ENCODE measurements at regions of chr1 and their contacts with region 1.

Region 1: DNA sequence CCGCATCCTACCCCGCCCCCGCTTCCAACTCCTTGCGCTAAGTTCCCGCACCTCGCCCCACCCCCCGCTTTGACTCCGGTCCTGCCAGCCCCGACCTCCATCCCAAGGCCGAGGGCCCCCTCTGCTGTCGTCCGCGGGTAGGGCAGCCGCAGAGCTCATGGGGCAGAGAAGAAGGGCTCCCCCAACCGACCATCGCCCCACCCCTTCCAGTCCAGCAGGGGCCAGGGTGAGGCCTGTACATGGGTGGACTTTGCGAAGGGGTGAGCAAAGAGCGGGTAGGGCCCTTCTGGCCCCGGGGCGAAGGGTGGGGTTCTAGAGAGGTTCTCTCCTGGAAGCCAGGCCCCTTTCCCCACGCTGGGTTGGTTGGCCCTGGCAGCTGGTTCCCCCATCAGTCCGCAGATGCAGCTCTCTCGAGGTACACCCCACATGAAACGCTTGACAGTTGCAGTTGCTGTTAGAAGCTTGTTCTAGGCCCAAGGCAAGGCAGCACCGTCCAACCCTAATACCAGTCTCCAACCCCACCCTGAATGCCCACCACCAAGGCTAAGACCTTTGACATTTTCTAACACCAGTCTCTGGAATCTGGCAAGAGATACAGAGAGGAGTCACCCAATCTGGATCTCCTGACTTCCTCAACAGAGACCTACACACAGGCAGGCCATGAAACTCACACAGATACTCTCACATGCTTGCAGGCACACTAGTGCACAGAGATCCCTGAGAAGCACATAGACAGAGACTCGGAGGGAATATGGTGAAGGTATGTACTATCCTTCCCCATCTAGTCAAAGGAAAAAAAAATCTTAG is 25.3 kb upstream of the ADGRB2 start:
- DNase-seq: peak; percentile 98
- ATAC-seq: peak; percentile 82
- H3K4me3 Mint-ChIP-seq: peak overlapping the region; percentile 76
- H3K27ac Mint-ChIP-seq: peak overlapping the region; percentile 35
- H3K4me1 Mint-ChIP-seq: peaks cover 11% of the 10 kb centered on the region
- H3K27me3 Mint-ChIP-seq: no peaks in the 10 kb centered on the region

Region 2: GRCh38 chr1:31644560-31645273 is 144.7 kb before region 1 on chr1 and contains the start of gene PEF1:
- CTCF ChIA-PET with region 1: interaction called, 31 read pairs
- DNase-seq: peak; percentile 99
- ATAC-seq: peak; percentile 85
- H3K4me3 Mint-ChIP-seq: peak within 1 kb of the TSS; percentile 96
- H3K27ac Mint-ChIP-seq: peak within 1 kb of the TSS; percentile 100
- H3K4me1 Mint-ChIP-seq: peaks cover 29% of the 10 kb centered on the region
- H3K27me3 Mint-ChIP-seq: no peaks in the 10 kb centered on the region
- total RNA-seq, gene PEF1: 45.9 to 47.1 TPM

Region 3: DNA sequence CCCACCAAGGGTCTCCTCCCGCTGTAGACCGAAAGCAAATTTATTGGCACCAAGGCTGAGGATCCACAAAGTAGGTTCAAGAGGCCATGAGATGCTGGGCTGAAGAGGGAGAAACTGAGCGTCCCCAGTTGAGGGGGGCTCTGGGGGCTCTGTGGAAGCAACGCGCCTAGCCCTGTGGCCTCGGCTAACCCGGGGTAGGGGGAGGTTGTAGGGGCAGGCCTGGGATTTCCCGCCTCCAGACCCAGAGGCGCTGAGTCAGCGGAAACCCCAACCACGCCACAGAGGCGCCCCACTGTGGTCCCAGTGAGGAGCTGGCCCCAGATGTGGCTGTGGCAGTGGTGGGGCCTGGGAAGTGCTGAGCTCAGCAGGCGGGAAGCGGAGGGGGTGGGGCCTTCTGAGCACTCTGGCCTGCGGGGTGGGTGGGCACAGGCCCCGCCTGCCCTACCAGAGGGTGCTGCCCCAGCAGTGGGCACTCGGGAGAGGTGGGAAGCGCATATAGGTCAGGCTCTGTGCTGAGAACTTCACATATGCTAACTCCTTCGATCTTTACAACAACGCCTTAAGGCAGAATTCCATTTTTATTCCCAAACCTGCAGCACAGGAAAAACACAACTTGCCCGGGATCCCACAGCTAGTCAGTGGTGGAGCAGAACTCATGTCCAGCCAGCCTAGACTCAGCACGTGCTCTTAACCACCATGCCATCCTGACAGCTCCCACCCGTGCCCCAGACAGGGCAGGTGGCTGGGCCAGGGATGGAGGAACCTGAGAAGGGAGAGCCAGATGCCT is 84.2 kb before region 1 on chr1:
- CTCF ChIA-PET with region 1: interaction called, 60 read pairs
- DNase-seq: peak; percentile 92
- ATAC-seq: peak; percentile 87
- H3K4me3 Mint-ChIP-seq: peak overlapping the region; percentile 31
- H3K27ac Mint-ChIP-seq: peak overlapping the region; percentile 61
- H3K4me1 Mint-ChIP-seq: peaks cover 51% of the 10 kb centered on the region
- H3K27me3 Mint-ChIP-seq: peaks cover 44% of the 10 kb centered on the region

Region 4: GRCh38 chr1:31732751-31733289 is 56.6 kb before region 1 on chr1:
- CTCF ChIA-PET with region 1: no interaction called
- DNase-seq: no peak
- ATAC-seq: no peak
- H3K4me3 Mint-ChIP-seq: no peak overlapping the region
- H3K27ac Mint-ChIP-seq: no peak overlapping the region
- H3K4me1 Mint-ChIP-seq: no peaks in the 10 kb centered on the region
- H3K27me3 Mint-ChIP-seq: no peaks in the 10 kb centered on the region

Region 5: GRCh38 chr1:31753707-31754349 is 35.6 kb before region 1 on chr1:
- CTCF ChIA-PET with region 1: interaction called, 26 read pairs
- DNase-seq: no peak
- ATAC-seq: no peak
- H3K4me3 Mint-ChIP-seq: no peak overlapping the region
- H3K27ac Mint-ChIP-seq: no peak overlapping the region
- H3K4me1 Mint-ChIP-seq: peaks cover 40% of the 10 kb centered on the region
- H3K27me3 Mint-ChIP-seq: peaks cover 9% of the 10 kb centered on the region

Region 6: GRCh38 chr1:31815752-31816500 is 26.5 kb after region 1 on chr1 and contains the start of gene SPOCD1:
- CTCF ChIA-PET with region 1: interaction called, 10 read pairs
- DNase-seq: peak; percentile 92
- ATAC-seq: peak; percentile 94
- H3K4me3 Mint-ChIP-seq: no peak within 1 kb of the TSS
- H3K27ac Mint-ChIP-seq: no peak within 1 kb of the TSS
- H3K4me1 Mint-ChIP-seq: peaks cover 6% of the 10 kb centered on the region
- H3K27me3 Mint-ChIP-seq: no peaks in the 10 kb centered on the region
- total RNA-seq, gene SPOCD1: not detected

Region 7: DNA sequence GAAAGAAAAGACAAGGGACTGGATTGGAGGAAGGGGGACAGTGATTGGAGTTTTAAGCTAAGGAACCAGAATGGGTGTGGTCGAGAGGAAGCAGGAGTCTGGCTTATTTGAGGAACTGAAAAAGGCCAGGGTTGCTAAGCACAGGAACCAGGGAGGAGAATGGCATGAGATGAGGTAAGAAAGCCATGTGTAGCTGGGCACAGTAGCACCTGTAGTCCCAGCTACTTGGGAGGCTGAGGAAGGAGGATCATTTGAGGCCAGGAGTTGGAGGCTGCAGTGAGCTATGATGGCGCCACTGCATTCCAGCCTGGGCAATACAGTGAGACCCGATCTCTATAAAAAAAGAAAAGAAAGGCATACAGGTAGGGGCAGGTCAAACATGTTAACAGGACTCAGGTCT is 216.1 kb after region 1 on chr1:
- CTCF ChIA-PET with region 1: interaction called, 11 read pairs
- DNase-seq: no peak
- ATAC-seq: no peak
- H3K4me3 Mint-ChIP-seq: no peak overlapping the region
- H3K27ac Mint-ChIP-seq: no peak overlapping the region
- H3K4me1 Mint-ChIP-seq: peaks cover 8% of the 10 kb centered on the region
- H3K27me3 Mint-ChIP-seq: peaks cover 4% of the 10 kb centered on the region